ENCODE measurements at regions of chr2 and their contacts with region 1.

Region 1: GRCh38 chr2:169877398-169877797 is 50.1 kb downstream of the UBR3 start:
- DNase-seq: peak in 1 of 2 donors; percentile 33
- ATAC-seq: no peak
- H3K4me3 ChIP-seq: no peak overlapping the region
- H3K4me3 Mint-ChIP-seq: no peak overlapping the region
- H3K27ac ChIP-seq: no peak overlapping the region
- H3K27ac Mint-ChIP-seq: no peak overlapping the region
- H3K4me1 ChIP-seq: no peaks in the 10 kb centered on the region
- H3K4me1 Mint-ChIP-seq: no peaks in the 10 kb centered on the region
- H3K27me3 ChIP-seq: no peaks in the 10 kb centered on the region
- H3K27me3 Mint-ChIP-seq: no peaks in the 10 kb centered on the region
- CTCF ChIP-seq: no peak

Region 2: DNA sequence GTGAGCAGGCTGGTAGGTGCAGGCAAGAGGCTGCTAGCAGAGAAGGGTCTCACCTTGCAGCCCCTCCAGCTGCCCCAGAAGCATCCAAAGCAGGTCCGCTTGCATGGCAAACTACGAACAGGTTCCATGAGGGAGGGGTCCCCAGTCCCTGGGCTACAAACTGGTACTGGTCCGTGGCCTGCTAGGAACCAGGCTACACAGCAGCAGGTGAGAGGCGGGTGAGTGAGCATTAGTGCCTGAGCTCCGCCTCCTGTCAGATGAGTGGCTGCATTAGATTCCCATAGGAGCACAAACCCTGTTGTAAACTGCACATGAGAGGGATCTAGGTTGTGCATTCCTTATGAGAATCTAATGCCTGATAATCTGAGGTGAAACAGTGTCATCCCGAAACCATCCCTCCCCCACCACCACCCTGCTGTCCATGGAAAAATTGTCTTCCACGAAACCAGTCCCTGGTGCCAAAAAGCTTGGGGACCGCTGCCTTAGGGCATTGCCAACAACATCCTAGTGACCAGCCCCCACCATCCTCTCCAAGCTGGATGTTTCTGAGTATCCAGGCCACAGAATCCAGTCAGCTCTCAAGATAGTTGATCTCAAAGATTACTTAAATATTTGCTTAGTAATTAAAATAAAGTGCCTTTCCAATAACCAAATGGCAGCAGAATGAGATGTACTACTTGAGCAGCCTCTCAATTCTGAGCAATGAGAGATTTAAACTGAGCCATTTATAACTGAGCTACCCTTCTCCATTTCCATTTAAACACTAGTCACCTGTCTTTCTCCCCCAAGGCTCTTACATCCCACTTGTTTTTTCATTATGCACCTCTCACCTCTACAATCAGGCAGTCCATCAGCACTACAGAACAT is 547.5 kb before region 1 on chr2:
- intact Hi-C with region 1: no loop called
- DNase-seq: no peak
- ATAC-seq: no peak
- H3K4me3 ChIP-seq: no peak overlapping the region
- H3K4me3 Mint-ChIP-seq: no peak overlapping the region
- H3K27ac ChIP-seq: no peak overlapping the region
- H3K27ac Mint-ChIP-seq: no peak overlapping the region
- H3K4me1 ChIP-seq: no peaks in the 10 kb centered on the region
- H3K4me1 Mint-ChIP-seq: no peaks in the 10 kb centered on the region
- H3K27me3 ChIP-seq: peaks cover 3% of the 10 kb centered on the region
- H3K27me3 Mint-ChIP-seq: peaks cover 5 to 9% of the 10 kb centered on the region in 2 donors
- CTCF ChIP-seq: no peak

Region 3: DNA sequence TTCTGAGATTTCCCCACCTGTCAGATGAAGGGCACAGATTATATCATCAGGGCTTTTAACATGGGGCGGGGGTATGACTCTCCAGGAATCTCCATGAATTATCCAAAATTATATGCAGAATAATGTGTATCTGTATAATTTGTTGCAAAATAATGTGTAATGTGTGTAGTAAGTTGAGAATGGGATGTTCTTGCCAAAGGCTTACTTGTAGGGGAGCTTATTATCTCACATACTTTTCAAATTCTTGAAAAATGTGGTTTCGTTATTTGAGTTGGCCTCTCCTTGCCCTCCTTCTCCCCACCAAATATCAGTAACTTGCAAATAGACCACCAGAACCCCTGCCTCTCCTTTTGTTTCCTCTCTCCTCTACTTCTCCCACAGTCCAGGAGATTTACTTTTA is 14.6 kb before region 1 on chr2:
- intact Hi-C with region 1: no loop called
- DNase-seq: no peak
- ATAC-seq: no peak
- H3K4me3 ChIP-seq: no peak overlapping the region
- H3K4me3 Mint-ChIP-seq: no peak overlapping the region
- H3K27ac ChIP-seq: no peak overlapping the region
- H3K27ac Mint-ChIP-seq: no peak overlapping the region
- H3K4me1 ChIP-seq: no peaks in the 10 kb centered on the region
- H3K4me1 Mint-ChIP-seq: peaks cover 32 to 38% of the 10 kb centered on the region in 2 donors
- H3K27me3 ChIP-seq: no peaks in the 10 kb centered on the region
- H3K27me3 Mint-ChIP-seq: no peaks in the 10 kb centered on the region
- CTCF ChIP-seq: no peak

Region 4: DNA sequence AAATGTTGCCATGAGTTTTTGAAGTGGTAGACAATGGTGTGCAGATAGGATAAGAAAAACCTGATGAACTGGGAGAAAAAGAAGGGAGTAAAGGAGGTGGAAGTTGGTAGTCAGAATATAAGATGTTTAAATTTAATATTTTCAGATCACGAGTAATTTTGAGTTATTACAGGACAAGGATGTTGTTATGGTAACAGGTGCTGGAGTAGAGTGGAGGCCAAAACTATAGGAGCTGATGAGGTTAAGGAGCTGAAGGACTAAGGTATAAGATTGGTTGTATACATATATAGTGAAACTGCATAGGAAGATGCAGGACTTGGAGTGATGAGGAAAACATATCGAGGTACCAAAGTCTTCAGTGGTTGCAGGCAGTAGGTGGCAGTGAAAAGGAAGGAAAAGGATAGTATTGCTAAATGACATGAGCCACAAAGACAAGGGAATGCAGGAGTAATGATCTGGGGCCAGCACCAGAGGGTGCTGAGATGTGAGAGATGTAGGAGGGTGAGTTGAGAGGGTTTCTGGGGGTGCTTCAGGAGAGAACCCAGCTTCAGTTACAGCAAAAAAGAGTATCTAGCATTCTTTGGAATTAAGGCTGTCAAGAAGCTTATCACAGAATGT is 128.2 kb after region 1 on chr2:
- intact Hi-C with region 1: loop called (anchors 5 kb)
- DNase-seq: no peak
- ATAC-seq: no peak
- H3K4me3 ChIP-seq: no peak overlapping the region
- H3K4me3 Mint-ChIP-seq: no peak overlapping the region
- H3K27ac ChIP-seq: no peak overlapping the region
- H3K27ac Mint-ChIP-seq: no peak overlapping the region
- H3K4me1 ChIP-seq: no peaks in the 10 kb centered on the region
- H3K4me1 Mint-ChIP-seq: no peaks in the 10 kb centered on the region
- H3K27me3 ChIP-seq: no peaks in the 10 kb centered on the region
- H3K27me3 Mint-ChIP-seq: no peaks in the 10 kb centered on the region
- CTCF ChIP-seq: no peak

Measured in natural killer cell (primary cell).